Ascending aorta (tissue), 2 donors: ENCODE measurements at regions of chr3 and their contacts with region 1.

Region 1: DNA sequence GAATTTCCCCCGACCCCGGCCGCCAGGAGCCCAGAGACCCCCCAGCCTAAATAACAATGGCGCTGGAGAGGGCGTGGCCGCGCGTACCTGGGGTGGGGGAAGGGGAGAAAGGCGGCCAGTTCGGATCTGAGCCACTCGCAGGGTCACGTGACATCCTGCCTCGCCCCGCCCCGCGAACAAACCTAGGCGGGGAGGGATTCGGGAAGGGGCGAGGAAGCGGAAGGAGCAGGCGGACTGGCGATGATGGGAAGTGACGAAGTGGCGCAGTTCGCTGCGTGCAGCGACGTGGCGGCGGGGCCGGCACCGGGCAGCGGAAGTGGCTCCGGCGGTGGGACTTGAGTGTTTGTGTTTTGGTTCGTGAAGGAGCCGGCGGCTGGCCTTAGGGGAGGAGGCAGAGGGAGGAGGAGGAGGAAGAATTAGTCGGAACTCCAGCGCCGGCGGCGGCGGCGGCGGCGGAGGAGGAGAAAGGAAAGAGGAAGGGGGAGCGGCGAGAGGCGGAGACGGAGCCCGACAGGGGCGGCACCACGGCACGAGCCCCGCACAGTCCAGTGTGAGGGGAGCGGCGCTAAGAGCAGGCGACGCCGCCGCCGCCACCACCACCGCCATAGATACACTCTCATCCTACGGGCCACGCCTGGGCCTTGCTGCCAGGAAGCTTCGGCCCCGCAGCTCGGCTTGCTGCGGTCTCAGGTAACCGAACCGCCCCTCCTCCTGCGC is at the start of gene RAB5A:
- DNase-seq: peak; percentile 95 to 99
- H3K4me3 ChIP-seq: peak within 1 kb of the TSS; percentile 94 to 99
- H3K27ac ChIP-seq: peak within 1 kb of the TSS; percentile 100
- H3K4me1 ChIP-seq: peaks cover 10 to 21% of the 10 kb centered on the region in 2 donors
- H3K27me3 ChIP-seq: no peaks in the 10 kb centered on the region
- CTCF ChIP-seq: no peak
- total RNA-seq, gene RAB5A: 54.9 TPM

Region 2: DNA sequence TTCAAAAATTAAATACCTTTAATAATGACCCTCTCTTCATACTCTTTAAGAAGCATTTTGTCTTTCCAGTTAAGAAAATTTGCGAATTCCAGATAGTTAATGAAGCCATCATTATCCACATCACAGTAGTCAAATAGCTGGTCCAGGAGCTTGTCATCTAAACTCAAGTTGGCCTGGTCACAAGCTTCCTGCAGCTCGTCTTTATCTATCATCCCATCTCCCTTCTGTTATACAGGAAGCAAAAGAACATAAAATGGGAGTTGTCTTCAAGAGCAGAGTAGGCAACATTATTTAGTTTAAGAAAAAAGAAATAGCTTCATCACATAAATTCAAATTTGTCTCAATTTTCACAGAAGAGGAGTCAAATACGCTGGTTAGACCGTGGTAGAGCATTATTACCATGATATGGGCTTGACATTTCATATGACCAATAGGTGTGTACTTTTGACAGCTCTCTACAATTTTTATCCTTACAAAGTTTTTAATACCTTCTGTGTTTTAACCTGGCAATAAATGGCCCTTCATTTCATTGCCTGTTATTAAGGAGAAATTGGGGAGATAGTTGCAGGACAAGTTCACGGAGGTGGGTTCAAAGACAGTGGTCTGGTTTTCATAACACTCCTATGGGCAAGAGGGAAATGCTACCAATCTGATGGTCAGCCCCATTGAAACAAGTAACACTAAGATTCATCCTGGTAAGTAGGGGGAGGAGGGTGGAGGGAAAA is 58.4 kb before region 1 on chr3:
- intact Hi-C with region 1: loop called (anchors 1 kb)
- DNase-seq: no peak
- H3K4me3 ChIP-seq: peak overlapping the region in 1 of 2 donors; percentile 40
- H3K27ac ChIP-seq: peak overlapping the region in 1 of 2 donors; percentile 38
- H3K4me1 ChIP-seq: peaks cover 0 to 3% of the 10 kb centered on the region in 2 donors
- H3K27me3 ChIP-seq: no peaks in the 10 kb centered on the region
- CTCF ChIP-seq: no peak

Region 3: GRCh38 chr3:20185701-20186598 is 239.0 kb after region 1 on chr3 and contains the start of gene SGO1:
- intact Hi-C with region 1: loop called (anchors 2 kb)
- DNase-seq: peak; percentile 99 to 100
- H3K4me3 ChIP-seq: peak within 1 kb of the TSS; percentile 70 to 85
- H3K27ac ChIP-seq: peak within 1 kb of the TSS; percentile 91 to 94
- H3K4me1 ChIP-seq: peaks cover 0 to 6% of the 10 kb centered on the region in 2 donors
- H3K27me3 ChIP-seq: no peaks in the 10 kb centered on the region
- CTCF ChIP-seq: no peak
- total RNA-seq, gene SGO1: not detected